Thyroid gland (tissue), 4 donors: ENCODE measurements at regions of chr5 and their contacts with region 1.

Region 1: DNA sequence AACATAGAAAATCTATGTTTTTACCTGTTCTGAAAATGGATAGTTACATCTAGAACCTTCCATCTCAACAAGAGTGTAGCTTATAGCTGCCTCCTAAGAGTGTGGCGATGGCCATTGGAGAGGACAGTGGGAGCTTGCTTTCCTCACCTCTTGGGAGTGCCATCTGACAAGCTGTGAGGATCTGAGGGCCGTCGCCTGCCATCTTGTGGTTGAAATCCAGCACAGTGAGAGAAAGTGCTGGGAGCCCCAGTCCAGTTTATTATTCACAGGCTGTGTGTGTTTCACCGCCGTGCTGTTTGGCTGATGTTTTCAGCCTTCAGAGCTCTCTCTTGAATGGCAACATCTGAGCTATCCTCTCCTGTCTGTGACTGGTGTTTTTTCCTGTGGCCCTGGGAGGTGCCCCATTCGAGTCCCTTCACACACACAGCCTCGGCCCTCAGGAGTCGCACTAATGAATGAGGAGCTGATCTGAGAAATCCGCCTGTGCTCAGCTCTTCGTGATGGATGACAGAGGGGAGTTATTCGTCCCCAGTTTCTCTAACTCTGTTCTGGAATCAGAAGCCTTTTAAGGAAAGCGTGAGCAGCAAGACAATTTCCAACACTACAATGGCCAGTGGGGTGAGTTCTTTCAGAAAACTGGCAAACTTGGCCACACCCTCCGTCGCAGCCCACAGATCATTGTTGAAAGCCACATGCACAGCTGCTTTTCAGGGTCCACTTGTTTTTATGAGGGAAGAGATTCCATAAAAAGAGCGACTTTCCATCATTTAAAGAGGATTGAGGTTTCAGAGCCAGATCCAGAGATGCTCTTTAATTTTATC is 170.3 kb downstream of the PDZD2 start:
- DNase-seq: peak; percentile 49 to 72
- H3K4me3 ChIP-seq: no peak overlapping the region
- H3K27ac ChIP-seq: no peak overlapping the region
- H3K4me1 ChIP-seq: peaks cover 0 to 7% of the 10 kb centered on the region in 2 donors
- H3K27me3 ChIP-seq: no peaks in the 10 kb centered on the region
- CTCF ChIP-seq: peak in 4 of 6 experiments; percentile 25 to 63 (median 56)
- POLR2A ChIP-seq: no peak

Region 2: GRCh38 chr5:30650311-30650710 is 1158.9 kb before region 1 on chr5:
- intact Hi-C with region 1: no loop called
- DNase-seq: no peak
- H3K4me3 ChIP-seq: no peak overlapping the region
- H3K27ac ChIP-seq: no peak overlapping the region
- H3K4me1 ChIP-seq: no peaks in the 10 kb centered on the region
- H3K27me3 ChIP-seq: no peaks in the 10 kb centered on the region
- CTCF ChIP-seq: no peak
- POLR2A ChIP-seq: no peak

Region 3: GRCh38 chr5:31581498-31582099 is 227.7 kb before region 1 on chr5:
- intact Hi-C with region 1: loop called (anchors 2 kb)
- DNase-seq: no peak
- H3K4me3 ChIP-seq: no peak overlapping the region
- H3K27ac ChIP-seq: no peak overlapping the region
- H3K4me1 ChIP-seq: no peaks in the 10 kb centered on the region
- H3K27me3 ChIP-seq: no peaks in the 10 kb centered on the region
- CTCF ChIP-seq: peak in 3 of 6 experiments; percentile 56 to 67 (median 56)
- POLR2A ChIP-seq: no peak